ENCODE measurements at regions of chr17 and their contacts with region 1.

Region 1: DNA sequence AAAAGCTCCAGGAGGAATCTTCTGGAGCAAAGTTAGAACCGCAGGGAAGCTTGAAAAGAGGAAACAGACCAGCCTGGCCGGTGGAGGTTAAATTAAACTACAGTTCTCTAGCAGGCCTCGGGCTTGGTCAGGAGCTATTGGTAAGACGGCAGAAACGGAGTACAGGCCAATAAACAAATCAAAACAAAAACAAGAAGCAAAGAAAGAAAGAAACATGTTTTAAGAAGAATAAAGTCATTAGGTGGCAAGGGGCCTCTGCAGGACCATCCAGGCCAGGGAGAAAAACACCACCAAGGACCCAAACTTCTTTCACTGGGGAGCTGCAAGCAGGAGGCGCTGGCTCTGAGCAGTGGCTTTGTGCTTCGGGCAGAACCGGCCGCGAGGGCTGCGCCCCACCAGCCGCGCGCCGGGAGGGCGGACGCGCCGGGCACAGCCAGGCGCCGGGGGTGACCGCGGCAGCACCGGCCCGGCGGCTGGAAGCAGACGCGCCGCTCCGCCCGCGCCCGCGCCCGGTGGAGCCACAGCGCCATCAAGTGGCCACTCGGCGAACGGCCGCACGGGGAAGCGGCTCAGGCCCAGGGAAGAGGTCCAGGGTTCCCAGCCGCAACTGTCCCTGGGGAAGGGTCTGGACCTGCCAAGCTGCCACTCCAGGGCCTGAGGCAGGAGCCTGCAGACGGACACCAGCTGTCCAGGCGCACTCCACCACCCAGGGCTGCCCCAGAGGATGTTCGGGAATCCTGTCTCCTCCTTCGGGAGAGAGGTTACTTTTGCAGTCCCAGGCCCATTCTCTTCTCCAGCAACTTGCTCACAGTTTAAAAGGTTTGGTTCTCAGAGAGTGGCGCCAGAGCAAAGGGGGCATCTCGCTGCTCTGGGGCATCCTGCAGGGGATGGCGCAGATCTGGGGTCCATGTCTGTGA is 419.4 kb downstream of the SOX9 start:
- DNase-seq: peak; percentile 49 to 91 (median 68)
- H3K4me3 ChIP-seq: peak overlapping the region in 48 of 59 donors; percentile 4 to 60 (median 38)
- H3K27ac ChIP-seq: peak overlapping the region in 55 of 59 donors; percentile 10 to 89 (median 75)
- H3K27me3 ChIP-seq: peaks cover 0 to 4% (median 0%) of the 10 kb centered on the region in 45 donors
- CTCF ChIP-seq: peak; percentile 45 to 97 (median 85)

Region 2: DNA sequence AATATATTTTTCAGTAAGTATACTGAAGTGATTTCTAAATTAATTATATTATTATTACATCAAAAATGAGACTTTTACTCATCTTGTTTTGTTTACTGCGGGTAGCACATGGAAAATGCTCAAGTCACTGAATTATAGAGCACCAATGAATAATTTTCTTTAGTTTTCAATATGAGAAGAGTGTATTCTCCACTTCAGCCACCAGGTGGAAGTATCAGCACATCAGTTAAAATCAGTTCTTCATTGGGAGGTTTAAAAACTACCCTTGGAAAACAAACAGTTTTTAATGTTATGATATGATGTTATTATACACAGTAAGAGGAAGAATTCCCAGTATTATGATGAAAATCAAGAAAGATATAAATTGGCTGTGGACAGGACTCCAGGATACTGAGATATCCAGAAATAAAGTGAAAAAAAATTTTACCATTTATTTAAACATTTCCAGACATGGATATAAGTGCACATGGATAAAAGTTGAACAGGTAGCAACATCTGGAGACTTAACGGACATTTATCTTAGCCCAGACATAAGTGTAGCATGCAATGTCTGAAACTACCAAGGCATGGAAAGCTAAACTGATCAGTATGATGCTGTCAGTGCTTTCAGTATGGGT is 1903.6 kb before region 1 on chr17:
- intact Hi-C with region 1: loop called (anchors 2 to 10 kb)
- DNase-seq: no peak
- H3K4me3 ChIP-seq: peak overlapping the region in 1 of 59 donors; percentile 22
- H3K27ac ChIP-seq: peak overlapping the region in 5 of 59 donors; percentile 2 to 28 (median 13)
- H3K27me3 ChIP-seq: no peaks in the 10 kb centered on the region
- CTCF ChIP-seq: peak; percentile 80 to 99 (median 93)

Region 3: DNA sequence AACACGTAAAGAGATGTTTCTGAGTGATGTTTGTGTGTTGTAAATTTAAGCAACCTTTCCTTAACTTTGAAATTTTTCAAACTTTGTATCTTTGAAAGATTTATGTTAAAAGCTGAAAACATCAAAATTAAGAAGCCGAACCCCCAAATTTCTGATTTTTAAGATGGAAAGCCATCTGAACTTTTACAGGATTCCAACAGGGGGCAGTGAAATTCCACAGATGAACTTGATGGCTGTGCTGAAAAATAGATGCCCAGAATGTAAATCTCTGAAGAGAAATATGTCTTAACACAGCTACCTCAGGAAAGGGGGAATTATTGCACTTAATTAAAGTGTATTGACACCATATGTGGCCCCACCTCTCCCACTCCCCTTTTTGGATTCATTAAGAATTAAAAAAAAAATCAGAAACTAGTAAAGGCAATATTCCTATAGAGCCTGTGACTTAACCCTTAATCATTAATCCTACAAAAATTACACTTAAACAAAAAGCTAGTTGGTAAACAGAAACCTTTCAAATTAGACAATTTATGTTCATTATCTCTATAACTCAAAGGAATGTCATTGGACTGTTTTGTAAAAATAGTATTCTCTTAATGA is 1773.0 kb before region 1 on chr17:
- intact Hi-C with region 1: loop called (anchors 5 kb)
- DNase-seq: no peak
- H3K4me3 ChIP-seq: no peak overlapping the region
- H3K27ac ChIP-seq: no peak overlapping the region
- H3K27me3 ChIP-seq: no peaks in the 10 kb centered on the region
- CTCF ChIP-seq: peak; percentile 64 to 90 (median 83)

Region 4: DNA sequence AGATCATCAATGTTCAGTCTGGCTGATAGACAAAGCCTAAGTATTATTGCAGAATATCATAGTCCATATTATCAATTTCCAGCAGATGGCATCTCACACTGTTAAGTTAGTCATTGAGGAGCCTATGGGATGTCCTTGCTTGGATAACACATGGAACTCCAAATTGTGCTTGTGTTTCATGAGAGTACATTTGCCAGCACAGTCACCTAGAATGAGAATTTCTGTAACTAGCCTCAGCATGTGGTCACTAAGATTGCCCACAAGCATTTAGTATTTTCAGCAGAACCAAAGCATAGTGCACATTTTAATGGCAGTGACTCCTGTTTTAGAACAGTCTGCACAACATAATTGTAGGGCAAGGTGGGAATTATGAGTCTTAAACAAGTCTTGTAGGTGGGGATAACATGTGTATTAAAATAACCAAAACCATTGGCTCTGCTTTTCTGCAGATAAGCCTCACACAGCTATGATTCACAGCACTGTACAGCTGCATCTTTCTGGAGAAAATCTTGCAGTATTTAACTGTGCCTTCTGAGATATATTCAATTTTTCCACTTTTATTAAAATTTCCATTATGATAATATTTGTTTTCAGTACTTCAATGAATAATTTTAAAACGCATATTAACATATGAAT is 1302.2 kb before region 1 on chr17:
- intact Hi-C with region 1: loop called in 1 of 2 experiments (anchors 5 kb)
- DNase-seq: no peak
- H3K4me3 ChIP-seq: no peak overlapping the region
- H3K27ac ChIP-seq: no peak overlapping the region
- H3K27me3 ChIP-seq: no peaks in the 10 kb centered on the region
- CTCF ChIP-seq: peak in 54 of 56 donors; percentile 28 to 76 (median 52)

Region 5: DNA sequence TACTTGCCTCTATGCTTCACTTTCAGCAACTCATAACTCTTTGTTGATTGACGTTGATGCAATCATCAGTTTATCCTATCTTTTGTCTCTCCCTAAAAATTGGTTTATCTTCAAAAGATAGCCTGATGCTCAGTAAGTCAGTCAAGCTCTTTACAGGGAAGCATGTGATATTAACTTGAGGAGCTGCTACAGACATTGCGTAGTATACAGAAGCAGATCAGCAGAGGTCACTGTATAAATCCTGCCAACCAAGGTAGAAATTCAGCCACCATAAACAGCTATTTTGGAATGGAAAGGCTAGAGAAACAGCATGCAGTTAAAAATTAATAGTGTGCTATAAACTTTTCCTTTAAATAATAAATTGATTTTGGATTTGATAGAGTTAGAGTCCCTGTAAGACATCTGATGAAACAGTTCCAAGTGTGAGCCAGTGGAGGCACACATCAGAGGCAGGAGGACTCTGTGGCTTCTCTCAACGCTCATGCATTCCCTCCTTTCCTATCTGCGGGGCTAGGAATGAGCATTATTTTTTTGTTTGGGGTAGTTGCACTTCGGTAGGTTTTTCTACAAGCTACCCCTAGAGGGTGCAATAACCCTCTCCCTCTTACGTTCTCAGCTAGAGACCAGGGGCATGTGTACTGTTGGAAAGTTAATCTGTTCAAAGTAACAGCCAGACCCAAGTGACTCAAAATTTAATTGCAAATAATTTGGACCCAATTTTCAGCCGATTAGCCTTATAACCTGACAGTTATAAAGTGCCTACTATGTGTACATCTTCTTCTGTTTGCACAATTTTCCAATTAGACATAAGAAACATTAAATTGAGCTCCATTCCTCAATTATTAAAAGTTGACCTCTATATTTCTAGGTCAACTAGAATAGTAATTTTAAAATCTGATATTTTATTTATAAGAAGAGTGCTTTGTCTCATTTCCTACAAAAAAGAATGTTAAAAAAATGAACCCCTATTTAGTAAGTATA is 1067.1 kb before region 1 on chr17:
- intact Hi-C with region 1: loop called in 1 of 2 experiments (anchors 5 kb)
- DNase-seq: no peak
- H3K4me3 ChIP-seq: peak overlapping the region in 3 of 59 donors; percentile 9 to 22 (median 13)
- H3K27ac ChIP-seq: no peak overlapping the region
- H3K27me3 ChIP-seq: no peaks in the 10 kb centered on the region
- CTCF ChIP-seq: peak in 55 of 56 donors; percentile 26 to 82 (median 64)

Region 6: GRCh38 chr17:71870546-71870862 is 669.7 kb before region 1 on chr17:
- intact Hi-C with region 1: no loop called
- DNase-seq: no peak
- H3K4me3 ChIP-seq: no peak overlapping the region
- H3K27ac ChIP-seq: no peak overlapping the region
- H3K27me3 ChIP-seq: no peaks in the 10 kb centered on the region
- CTCF ChIP-seq: no peak

Region 7: GRCh38 chr17:72349491-72349995 is 190.7 kb before region 1 on chr17:
- intact Hi-C with region 1: loop called in 1 of 2 experiments (anchors 5 kb)
- DNase-seq: peak in 2 of 10 donors; percentile 39 to 45
- H3K4me3 ChIP-seq: no peak overlapping the region
- H3K27ac ChIP-seq: peak overlapping the region in 10 of 59 donors; percentile 4 to 59 (median 24)
- H3K27me3 ChIP-seq: no peaks in the 10 kb centered on the region
- CTCF ChIP-seq: no peak

Region 8: GRCh38 chr17:72603420-72604242 is 63.4 kb after region 1 on chr17:
- intact Hi-C with region 1: no loop called
- DNase-seq: no peak
- H3K4me3 ChIP-seq: no peak overlapping the region
- H3K27ac ChIP-seq: no peak overlapping the region
- H3K27me3 ChIP-seq: peaks cover 0 to 42% (median 9%) of the 10 kb centered on the region in 45 donors
- CTCF ChIP-seq: no peak

Region 9: DNA sequence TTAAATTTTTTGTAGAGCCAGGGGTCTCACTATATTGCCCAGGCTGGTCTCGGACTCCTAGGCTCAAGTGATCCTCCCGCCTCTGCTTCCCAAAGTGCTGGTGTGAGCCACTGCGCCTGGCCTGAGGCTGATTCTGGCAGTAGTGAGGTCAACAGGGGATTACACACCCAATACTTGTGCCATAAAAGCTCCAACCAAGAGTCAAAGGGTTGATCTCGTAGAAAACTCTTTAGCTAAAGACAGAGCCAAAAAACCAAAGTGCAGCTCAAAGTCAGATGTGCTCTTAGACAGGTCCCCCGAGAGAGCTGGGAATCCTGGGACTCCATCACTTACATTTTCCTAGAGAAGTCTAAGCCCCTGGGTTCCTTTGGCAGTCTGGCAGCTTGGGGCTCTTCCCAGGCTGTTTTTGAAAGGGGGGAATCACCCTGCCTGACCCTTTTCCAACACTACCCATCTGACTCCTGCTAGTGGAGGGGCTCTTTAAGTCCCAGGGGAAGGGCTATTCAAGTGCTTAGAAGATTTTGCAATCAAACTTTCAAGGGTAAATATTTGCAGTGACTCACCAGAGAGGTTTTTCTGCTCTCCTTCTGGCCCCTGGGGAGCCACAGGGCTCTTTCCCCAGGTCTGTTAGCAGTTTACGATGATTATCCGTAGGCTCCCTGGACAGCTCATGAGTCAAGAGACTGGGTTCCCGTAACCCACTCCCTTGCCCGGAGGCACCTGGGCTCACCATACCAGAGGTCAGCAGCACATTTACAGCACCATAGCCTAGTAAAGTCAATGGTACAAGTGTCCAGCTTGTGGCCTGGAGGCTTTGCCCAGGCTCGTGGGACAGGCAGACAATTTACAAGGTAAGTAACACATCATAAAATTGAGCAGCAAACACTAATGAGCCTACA is 143.5 kb after region 1 on chr17:
- intact Hi-C with region 1: no loop called
- DNase-seq: no peak
- H3K4me3 ChIP-seq: no peak overlapping the region
- H3K27ac ChIP-seq: no peak overlapping the region
- H3K27me3 ChIP-seq: no peaks in the 10 kb centered on the region
- CTCF ChIP-seq: no peak